ENCODE measurements at regions of chr11 and their contacts with region 1.

Region 1: GRCh38 chr11:77127232-77127911 is 674 bp upstream of the MYO7A start:
- DNase-seq: peak; percentile 75
- ATAC-seq: peak; percentile 89
- H3K4me3 Mint-ChIP-seq: peak overlapping the region; percentile 39
- H3K27ac Mint-ChIP-seq: peak overlapping the region; percentile 25
- H3K4me1 Mint-ChIP-seq: peaks cover 5% of the 10 kb centered on the region
- H3K27me3 Mint-ChIP-seq: peaks cover 3% of the 10 kb centered on the region

Region 2: DNA sequence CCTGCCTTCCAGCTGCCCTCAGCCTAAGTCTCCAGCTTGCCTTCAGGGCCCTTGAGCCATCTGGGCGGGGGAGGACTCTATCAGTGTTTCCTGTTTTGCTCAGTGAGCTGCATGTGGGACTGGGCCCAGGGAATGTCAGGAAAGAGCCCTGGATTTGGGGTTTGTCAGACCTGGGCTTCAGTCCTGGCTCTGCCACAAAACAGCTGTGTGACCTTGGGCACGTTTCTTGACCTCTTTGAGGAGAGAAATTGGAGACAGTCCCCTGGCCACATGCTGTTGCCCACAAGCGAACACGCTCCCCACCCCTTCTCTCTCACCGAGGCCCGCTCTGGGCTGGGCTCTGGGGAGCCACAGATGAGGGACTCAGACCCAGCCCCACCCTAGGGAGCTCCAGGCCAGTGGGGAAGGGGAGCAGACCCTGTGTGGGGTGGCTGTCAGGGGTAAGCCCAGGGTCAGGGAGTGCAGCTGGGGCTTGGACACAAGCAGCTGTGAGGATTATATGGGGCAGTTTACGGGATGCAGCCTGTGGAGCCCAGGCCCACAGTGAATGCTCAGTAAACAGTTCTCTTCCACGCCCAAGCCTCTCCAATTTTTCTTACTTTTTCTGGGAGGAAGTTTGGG is 13.0 kb after region 1 on chr11:
- CTCF ChIA-PET with region 1: interaction called, 10 read pairs
- POLR2A ChIA-PET with region 1: no interaction called
- intact Hi-C with region 1: no loop called
- DNase-seq: no peak
- ATAC-seq: no peak
- H3K4me3 Mint-ChIP-seq: no peak overlapping the region
- H3K27ac Mint-ChIP-seq: no peak overlapping the region
- H3K4me1 Mint-ChIP-seq: peaks cover 14% of the 10 kb centered on the region
- H3K27me3 Mint-ChIP-seq: peaks cover 13% of the 10 kb centered on the region

Region 3: GRCh38 chr11:77175869-77176539 is 48.6 kb after region 1 on chr11:
- CTCF ChIA-PET with region 1: interaction called, 16 read pairs
- POLR2A ChIA-PET with region 1: no interaction called
- intact Hi-C with region 1: no loop called
- DNase-seq: no peak
- ATAC-seq: no peak
- H3K4me3 Mint-ChIP-seq: no peak overlapping the region
- H3K27ac Mint-ChIP-seq: no peak overlapping the region
- H3K4me1 Mint-ChIP-seq: no peaks in the 10 kb centered on the region
- H3K27me3 Mint-ChIP-seq: no peaks in the 10 kb centered on the region

Region 4: GRCh38 chr11:77187776-77188632 is 60.6 kb after region 1 on chr11:
- CTCF ChIA-PET with region 1: interaction called, 79 read pairs
- POLR2A ChIA-PET with region 1: no interaction called
- intact Hi-C with region 1: loop called (anchors 1 kb)
- DNase-seq: peak; percentile 86
- ATAC-seq: peak; percentile 71
- H3K4me3 Mint-ChIP-seq: no peak overlapping the region
- H3K27ac Mint-ChIP-seq: no peak overlapping the region
- H3K4me1 Mint-ChIP-seq: peaks cover 3% of the 10 kb centered on the region
- H3K27me3 Mint-ChIP-seq: no peaks in the 10 kb centered on the region